Left ventricle myocardium superior (tissue), 1 donor: ENCODE measurements at regions of chr3 and their contacts with region 1.

Region 1: DNA sequence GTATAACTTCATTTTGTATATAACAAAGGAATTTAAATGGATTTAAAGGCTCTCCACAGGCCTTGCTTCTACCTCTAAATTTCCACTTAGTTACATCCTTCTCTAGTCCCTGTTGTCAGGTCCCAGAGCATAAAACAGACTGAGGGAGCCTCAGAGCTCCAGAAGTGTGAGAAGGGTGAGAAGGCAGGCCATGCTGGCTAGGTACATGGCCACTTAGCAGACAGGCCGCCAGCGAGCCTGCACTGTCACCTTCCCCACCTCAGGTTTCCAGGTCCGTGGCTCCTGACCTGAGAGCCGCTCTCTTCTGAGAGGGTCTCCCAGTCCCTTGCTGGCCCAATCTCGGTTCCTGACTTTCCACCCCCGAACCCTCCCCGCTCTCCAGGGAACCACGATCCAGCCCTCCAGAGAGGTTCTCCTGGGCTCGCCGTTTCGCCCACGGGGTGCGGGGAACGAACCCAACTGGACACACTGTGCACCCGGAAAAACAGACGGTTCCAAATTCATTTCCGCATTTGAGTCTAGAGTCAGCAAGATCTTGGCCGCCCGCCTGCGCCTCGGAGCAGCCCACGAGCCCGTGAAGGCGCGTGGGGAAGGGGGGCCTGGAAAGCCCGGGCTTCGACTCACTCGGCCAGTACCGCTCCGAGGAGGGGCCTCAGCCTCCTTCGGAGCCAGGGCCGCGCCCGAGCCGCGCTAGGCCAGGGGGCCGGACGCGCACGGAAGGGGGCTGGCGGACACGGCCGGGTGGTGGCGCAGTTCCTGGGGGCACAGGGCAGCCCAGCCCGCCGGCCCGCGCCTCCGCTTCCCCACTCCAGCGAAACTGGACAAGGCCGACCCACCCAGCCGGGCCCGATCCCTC is 16.7 kb upstream of the SOX2 start:
- DNase-seq: peak; percentile 73
- ATAC-seq: peak; percentile 93

Region 2: GRCh38 chr3:181326637-181327223 is 368.3 kb before region 1 on chr3:
- intact Hi-C with region 1: loop called (anchors 5 kb)
- DNase-seq: no peak
- ATAC-seq: peak; percentile 49